ENCODE measurements at regions of chr3 and their contacts with region 1.

Region 1: DNA sequence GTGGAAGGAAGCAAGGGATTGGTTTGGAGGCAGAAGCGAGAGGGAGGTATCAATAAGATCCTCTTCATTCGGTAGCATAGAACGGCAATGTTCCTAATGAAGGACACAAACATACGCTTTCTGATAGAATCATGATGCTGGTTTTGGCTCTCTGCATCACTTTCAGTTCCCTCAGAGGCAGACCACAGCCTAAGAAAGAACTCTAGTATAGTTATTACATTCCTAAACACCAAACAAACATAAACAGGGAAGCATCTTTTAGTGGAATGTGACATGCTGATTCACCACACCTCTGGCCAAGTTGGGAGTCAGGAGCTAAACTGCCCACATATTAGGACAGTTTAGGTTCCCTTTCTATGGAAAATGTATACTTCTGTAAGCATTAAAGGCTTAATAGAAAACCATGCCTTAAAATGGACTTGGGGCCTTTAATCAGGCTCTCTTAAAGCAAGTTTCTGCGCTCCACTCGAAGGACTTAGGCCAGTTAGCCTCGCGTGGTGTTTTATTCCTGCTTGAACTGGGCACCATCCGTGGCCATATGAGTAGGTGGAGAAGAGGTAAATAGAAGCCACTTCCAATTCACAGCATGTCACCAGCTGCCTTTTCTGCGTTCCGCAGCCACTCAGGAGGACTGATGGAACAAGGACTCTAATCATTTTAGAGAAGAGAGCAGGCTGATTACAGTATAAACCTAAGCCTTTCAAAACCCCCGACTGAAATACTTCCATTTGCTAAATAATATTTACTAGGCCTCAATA is 53.7 kb downstream of the CD47 start:
- DNase-seq: peak; percentile 27
- H3K4me3 ChIP-seq: no peak overlapping the region
- H3K27me3 ChIP-seq: no peaks in the 10 kb centered on the region
- CTCF ChIP-seq: no peak

Region 2: DNA sequence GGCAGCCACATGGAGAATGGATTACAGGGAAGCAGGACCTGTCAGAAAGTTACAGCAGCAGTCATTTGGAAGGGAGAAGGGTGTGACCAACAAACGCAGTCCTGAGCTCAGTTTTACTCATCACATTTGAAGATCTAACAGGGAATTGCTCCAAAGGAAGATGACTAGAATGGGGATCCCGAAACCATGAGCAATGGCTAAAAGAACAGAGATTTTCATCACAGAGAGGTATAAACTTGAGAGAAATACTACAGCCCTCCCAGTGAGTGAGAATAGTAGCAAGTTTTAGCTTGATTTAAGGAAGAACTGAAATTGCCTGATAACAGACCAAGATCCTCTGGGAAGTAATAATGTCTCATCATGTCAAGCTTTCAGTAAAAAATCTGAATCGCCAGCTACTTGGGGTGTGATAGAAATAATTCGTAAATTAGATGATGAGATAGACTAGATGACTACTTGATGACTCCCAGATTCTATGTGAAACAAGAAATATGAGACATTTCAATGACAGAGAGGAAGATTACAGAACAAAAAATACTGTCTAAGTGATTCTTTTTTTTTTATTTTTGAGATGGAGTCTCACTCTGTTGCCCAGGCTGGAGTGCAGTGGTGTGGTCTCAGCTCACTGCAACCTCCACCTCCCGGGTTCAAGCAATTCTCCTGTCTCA is 36.7 kb after region 1 on chr3:
- CTCF ChIA-PET with region 1: no interaction called
- POLR2A ChIA-PET with region 1: interaction called, 13 read pairs
- DNase-seq: no peak
- H3K4me3 ChIP-seq: no peak overlapping the region
- H3K27me3 ChIP-seq: no peaks in the 10 kb centered on the region
- CTCF ChIP-seq: no peak

Region 3: DNA sequence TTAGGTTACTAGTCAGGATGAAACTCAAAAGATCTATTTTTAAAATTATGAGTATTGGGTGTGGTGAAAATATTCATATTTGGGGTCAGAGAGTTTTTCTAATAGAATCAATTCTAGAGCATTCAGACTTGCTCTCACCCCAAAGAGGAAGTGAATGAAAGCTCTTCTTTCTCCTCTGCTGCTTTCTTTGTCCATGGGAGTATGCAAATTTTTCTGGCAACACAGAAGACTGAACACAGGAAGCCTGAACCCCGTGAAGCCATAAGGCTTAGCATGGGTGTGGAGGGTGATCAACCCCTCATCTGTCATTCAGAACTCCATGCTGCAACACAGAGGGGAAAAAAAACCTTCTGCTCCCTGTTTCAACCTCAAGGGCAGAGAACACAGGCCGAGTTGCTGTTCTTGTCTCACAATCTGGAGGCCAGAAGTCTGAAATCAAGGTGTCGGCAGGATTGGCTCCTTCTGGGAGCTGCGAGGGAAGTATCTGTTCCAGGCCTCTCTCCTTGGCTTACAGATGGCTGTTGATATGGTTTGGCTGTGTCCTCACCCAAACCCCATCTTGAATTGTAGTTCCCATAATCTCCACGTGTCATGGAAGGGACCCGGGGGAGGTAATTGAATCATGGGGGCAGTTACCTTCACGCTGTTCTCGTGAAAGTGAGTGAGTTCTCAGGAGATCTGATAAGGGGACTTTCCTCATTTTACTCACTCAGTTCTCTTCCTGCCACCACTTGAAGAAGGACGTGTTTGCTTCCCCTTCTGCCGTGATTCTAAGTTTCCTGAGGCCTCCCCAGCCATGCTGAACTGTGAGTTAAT is 87.4 kb after region 1 on chr3:
- CTCF ChIA-PET with region 1: no interaction called
- POLR2A ChIA-PET with region 1: no interaction called
- DNase-seq: no peak
- H3K4me3 ChIP-seq: no peak overlapping the region
- H3K27me3 ChIP-seq: no peaks in the 10 kb centered on the region; the same call in 1 of the 2 replicates
- CTCF ChIP-seq: no peak

Measured in BJ (cell line).